HepG2 (cell line): ENCODE measurements at regions of chr3 and their contacts with region 1.

Region 1: GRCh38 chr3:134308350-134308891 is 57.8 kb upstream of the RYK start:
- DNase-seq: peak; percentile 74
- ATAC-seq: peak; percentile 65
- H3K4me3 ChIP-seq: peak overlapping the region; percentile 27 to 60 (median 37); a peak in 5 of 6 replicates
- H3K27ac ChIP-seq: no peak overlapping the region
- H3K4me1 ChIP-seq: peaks cover 67% of the 10 kb centered on the region
- H3K27me3 ChIP-seq: no peaks in the 10 kb centered on the region; a peak in 1 of 5 replicates
- CTCF ChIP-seq: peak; percentile 99
- EP300 ChIP-seq: no peak
- POLR2A ChIP-seq: no peak
- RAD21 ChIP-seq: peak; percentile 98

Region 2: GRCh38 chr3:134029734-134030378 is 278.6 kb before region 1 on chr3 and contains the start of gene SLCO2A1:
- CTCF ChIA-PET with region 1: no interaction called
- POLR2A ChIA-PET with region 1: no interaction called
- in situ Hi-C with region 1: no loop called
- intact Hi-C with region 1: no loop called
- DNase-seq: no peak
- ATAC-seq: peak; percentile 79
- H3K4me3 ChIP-seq: peak within 1 kb of the TSS; percentile 58 to 73 (median 59)
- H3K27ac ChIP-seq: peak within 1 kb of the TSS; percentile 40
- H3K4me1 ChIP-seq: peaks cover 26% of the 10 kb centered on the region
- H3K27me3 ChIP-seq: peaks cover 11 to 31% of the 10 kb centered on the region in 2 experiments
- CTCF ChIP-seq: no peak
- EP300 ChIP-seq: no peak
- POLR2A ChIP-seq: no peak
- RAD21 ChIP-seq: no peak
- total RNA-seq, gene SLCO2A1: not detected in 2 replicates

Region 3: DNA sequence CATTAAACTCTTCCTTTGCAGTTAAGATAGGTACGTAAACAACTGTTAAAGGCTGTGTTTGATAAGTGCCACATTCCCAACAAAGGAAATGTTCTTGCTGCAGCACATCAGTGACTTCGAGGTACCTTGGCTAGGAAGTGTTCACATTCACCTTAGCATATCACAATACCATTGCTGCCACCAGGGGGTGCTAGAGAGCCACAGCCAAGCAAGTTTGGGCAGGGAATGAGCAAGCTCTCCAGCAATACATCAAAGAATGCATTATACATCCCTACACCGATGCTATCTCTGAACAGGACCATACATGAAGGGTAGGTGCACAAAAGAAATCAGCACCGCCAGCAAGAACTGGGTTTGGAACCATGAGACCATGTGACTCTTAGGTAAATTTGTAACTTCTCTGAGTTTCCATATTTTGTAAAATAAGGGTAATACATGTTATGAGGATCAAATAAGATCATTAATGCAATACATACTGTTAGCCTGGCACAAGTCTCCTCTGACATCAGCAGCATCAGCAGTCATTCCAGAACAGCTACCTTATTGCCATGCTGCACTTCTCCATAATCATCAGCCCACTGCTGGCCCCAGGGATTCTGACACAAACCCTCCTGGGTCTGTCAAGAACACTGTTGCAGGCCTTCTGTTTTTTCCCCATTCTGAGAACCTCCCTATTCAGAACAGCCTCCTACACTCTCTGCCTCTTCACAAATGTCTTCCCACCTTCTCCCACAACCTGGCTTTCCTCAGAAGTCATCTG is 95.3 kb before region 1 on chr3:
- CTCF ChIA-PET with region 1: interaction called, 3 read pairs
- POLR2A ChIA-PET with region 1: no interaction called
- in situ Hi-C with region 1: loop called (anchors 5 kb)
- intact Hi-C with region 1: loop called (anchors 2 kb)
- DNase-seq: peak; percentile 66
- ATAC-seq: peak; percentile 97
- H3K4me3 ChIP-seq: no peak overlapping the region
- H3K27ac ChIP-seq: no peak overlapping the region
- H3K4me1 ChIP-seq: no peaks in the 10 kb centered on the region
- H3K27me3 ChIP-seq: no peaks in the 10 kb centered on the region
- CTCF ChIP-seq: peak; percentile 95
- EP300 ChIP-seq: no peak
- POLR2A ChIP-seq: no peak
- RAD21 ChIP-seq: peak; percentile 70

Region 4: GRCh38 chr3:134326760-134327593 is 18.6 kb after region 1 on chr3:
- CTCF ChIA-PET with region 1: no interaction called
- POLR2A ChIA-PET with region 1: interaction called, 15 read pairs
- in situ Hi-C with region 1: no loop called
- intact Hi-C with region 1: no loop called
- DNase-seq: peak; percentile 90
- ATAC-seq: peak; percentile 95
- H3K4me3 ChIP-seq: no peak overlapping the region
- H3K27ac ChIP-seq: no peak overlapping the region
- H3K4me1 ChIP-seq: peaks cover 77% of the 10 kb centered on the region
- H3K27me3 ChIP-seq: no peaks in the 10 kb centered on the region
- CTCF ChIP-seq: no peak
- EP300 ChIP-seq: peak in 1 of 2 experiments; percentile 77; a peak in 1 of 4 replicates
- POLR2A ChIP-seq: no peak
- RAD21 ChIP-seq: no peak

Region 5: GRCh38 chr3:134357261-134358184 is 49.1 kb after region 1 on chr3:
- CTCF ChIA-PET with region 1: interaction called, 3 read pairs
- POLR2A ChIA-PET with region 1: interaction called, 24 read pairs
- in situ Hi-C with region 1: no loop called
- intact Hi-C with region 1: loop called (anchors 2 kb)
- DNase-seq: peak; percentile 87
- ATAC-seq: peak; percentile 82
- H3K4me3 ChIP-seq: no peak overlapping the region
- H3K27ac ChIP-seq: peak overlapping the region; percentile 56
- H3K4me1 ChIP-seq: peaks cover 70% of the 10 kb centered on the region
- H3K27me3 ChIP-seq: no peaks in the 10 kb centered on the region
- CTCF ChIP-seq: no peak
- EP300 ChIP-seq: peak in 1 of 2 experiments; percentile 47; a peak in 2 of 4 replicates
- POLR2A ChIP-seq: no peak
- RAD21 ChIP-seq: no peak

Region 6: GRCh38 chr3:134449277-134449676 is 140.9 kb after region 1 on chr3:
- CTCF ChIA-PET with region 1: interaction called, 23 read pairs
- POLR2A ChIA-PET with region 1: no interaction called
- in situ Hi-C with region 1: no loop called
- intact Hi-C with region 1: loop called (anchors 1 kb)
- DNase-seq: peak; percentile 56
- ATAC-seq: peak; percentile 92
- H3K4me3 ChIP-seq: no peak overlapping the region
- H3K27ac ChIP-seq: no peak overlapping the region
- H3K4me1 ChIP-seq: peaks cover 11% of the 10 kb centered on the region; the same call in 1 of the 2 replicates
- H3K27me3 ChIP-seq: peaks cover 2 to 8% of the 10 kb centered on the region in 2 experiments; a peak in 3 of 5 replicates
- CTCF ChIP-seq: peak; percentile 72
- EP300 ChIP-seq: no peak
- POLR2A ChIP-seq: no peak
- RAD21 ChIP-seq: peak; percentile 65; the same call in 1 of the 2 replicates

Region 7: GRCh38 chr3:134473868-134474546 is 165.6 kb after region 1 on chr3:
- CTCF ChIA-PET with region 1: interaction called, 48 read pairs
- POLR2A ChIA-PET with region 1: interaction called, 11 read pairs
- in situ Hi-C with region 1: loop called (anchors 5 kb)
- intact Hi-C with region 1: loop called (anchors 1 kb)
- DNase-seq: peak; percentile 80
- ATAC-seq: peak; percentile 90
- H3K4me3 ChIP-seq: no peak overlapping the region
- H3K27ac ChIP-seq: no peak overlapping the region
- H3K4me1 ChIP-seq: peaks cover 29% of the 10 kb centered on the region
- H3K27me3 ChIP-seq: no peaks in the 10 kb centered on the region
- CTCF ChIP-seq: peak; percentile 78
- EP300 ChIP-seq: no peak
- POLR2A ChIP-seq: no peak
- RAD21 ChIP-seq: peak; percentile 63

Region 8: GRCh38 chr3:134640872-134641470 is 332.6 kb after region 1 on chr3:
- CTCF ChIA-PET with region 1: no interaction called
- POLR2A ChIA-PET with region 1: no interaction called
- in situ Hi-C with region 1: no loop called
- intact Hi-C with region 1: loop called (anchors 2 kb)
- DNase-seq: peak; percentile 26
- ATAC-seq: peak; percentile 83
- H3K4me3 ChIP-seq: no peak overlapping the region
- H3K27ac ChIP-seq: no peak overlapping the region
- H3K4me1 ChIP-seq: peaks cover 8% of the 10 kb centered on the region
- H3K27me3 ChIP-seq: peaks cover 0 to 4% of the 10 kb centered on the region in 2 experiments; a peak in 2 of 5 replicates
- CTCF ChIP-seq: peak; percentile 57
- EP300 ChIP-seq: no peak
- POLR2A ChIP-seq: no peak
- RAD21 ChIP-seq: no peak